Activated T-helper 1 cell treated with anti-CD3 and anti-CD28 coated beads, Interleukin-12 subunit alpha, Interleukin-12 subunit beta, Interleukin-2, Interleukin-4 antibody, amounts not matched to agents 30 ng/mL and 10 ng/mL and 1 ng/mL, durations not matched to agents 14 hours and 24 hours and 36 hours (primary cell): ENCODE measurements at regions of chr15 and their contacts with region 1.

Region 1: GRCh38 chr15:85485956-85486567 is 105.7 kb downstream of the AKAP13 start:
- DNase-seq: peak; percentile 54
- H3K4me3 Mint-ChIP-seq: no peak overlapping the region
- H3K27ac Mint-ChIP-seq: no peak overlapping the region
- H3K4me1 Mint-ChIP-seq: peaks cover 57% of the 10 kb centered on the region
- H3K27me3 Mint-ChIP-seq: no peaks in the 10 kb centered on the region

Region 2: DNA sequence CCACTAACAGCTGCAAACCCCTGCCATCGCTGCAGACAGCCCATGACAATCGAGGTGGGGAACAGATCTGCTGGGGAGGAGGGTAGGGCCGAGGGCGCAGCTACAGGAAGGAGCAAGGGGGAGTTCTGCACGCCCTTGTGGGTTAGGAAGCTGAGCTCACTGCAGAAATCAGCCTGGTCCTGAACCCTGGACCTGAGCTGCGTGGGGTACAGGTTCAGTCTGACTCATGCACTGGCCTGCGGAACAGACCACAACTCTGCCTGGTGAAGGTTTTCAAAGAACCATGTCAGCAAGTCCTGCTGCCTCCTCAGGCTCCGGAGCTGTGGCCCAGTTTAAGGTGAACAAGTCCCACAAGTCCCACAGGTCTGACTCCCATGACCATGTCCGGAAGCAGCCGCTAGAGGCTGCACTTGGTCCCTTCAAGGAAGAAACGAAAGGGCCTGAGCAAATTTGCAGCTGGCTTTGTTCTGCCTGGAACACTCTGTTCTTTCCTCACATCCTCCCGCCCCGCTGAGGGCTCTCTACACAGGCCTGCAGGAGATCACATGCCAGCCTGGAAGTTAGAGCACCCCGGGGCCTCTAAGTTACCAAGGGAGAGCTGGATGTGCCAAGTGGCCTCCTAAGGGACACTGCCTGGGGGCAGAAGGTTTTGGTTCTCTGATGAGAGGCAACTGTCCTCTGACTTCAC is 155.0 kb before region 1 on chr15:
- intact Hi-C with region 1: loop called (anchors 1 kb)
- DNase-seq: peak; percentile 72
- H3K4me3 Mint-ChIP-seq: peak overlapping the region; percentile 88
- H3K27ac Mint-ChIP-seq: peak overlapping the region; percentile 92
- H3K4me1 Mint-ChIP-seq: peaks cover 51% of the 10 kb centered on the region
- H3K27me3 Mint-ChIP-seq: no peaks in the 10 kb centered on the region

Region 3: DNA sequence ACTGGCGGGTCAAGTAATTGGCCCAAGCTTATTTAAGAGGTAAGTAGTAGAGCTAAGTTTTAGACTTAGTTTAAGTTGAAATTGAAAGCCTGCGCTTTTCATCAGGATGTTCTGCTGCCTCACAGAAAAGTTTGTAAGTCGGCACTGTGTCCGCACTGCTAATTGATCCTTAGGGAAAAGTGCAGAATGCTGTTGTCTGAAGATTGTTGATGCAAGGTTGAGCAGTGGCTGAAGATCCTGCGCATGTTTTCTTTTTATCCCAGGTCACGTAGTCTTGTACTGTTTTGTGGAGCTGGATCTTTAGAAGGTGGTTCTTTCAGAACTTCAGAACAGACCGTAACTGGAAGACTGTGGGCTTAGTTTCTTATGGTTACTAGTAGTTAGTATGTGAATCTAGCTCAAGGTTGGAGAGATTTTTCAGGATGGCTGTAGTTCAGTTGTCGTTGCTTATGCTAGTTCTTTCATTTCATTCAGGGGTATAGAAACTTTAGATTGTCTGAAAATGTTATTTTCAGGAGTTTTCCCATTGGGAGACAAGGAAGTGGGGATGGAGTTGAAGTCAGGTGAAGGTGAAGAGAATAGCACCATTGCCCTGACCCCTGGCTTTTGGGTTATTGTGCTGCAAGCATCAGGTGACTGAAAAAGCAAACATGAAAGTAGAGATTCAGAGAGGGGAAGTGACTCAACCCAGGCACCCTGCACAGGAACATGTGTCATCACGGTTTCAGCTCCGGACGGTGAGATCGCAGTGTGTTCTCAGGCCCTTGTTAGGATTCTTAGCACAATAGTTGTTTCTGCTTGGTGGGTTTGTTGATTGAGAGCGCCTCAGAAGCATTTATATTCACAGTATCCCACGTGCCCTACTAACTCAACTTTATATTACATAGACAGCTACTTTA is 72.9 kb before region 1 on chr15:
- intact Hi-C with region 1: no loop called
- DNase-seq: peak; percentile 66
- H3K4me3 Mint-ChIP-seq: peak overlapping the region; percentile 64
- H3K27ac Mint-ChIP-seq: peak overlapping the region; percentile 85
- H3K4me1 Mint-ChIP-seq: peaks cover 64% of the 10 kb centered on the region
- H3K27me3 Mint-ChIP-seq: no peaks in the 10 kb centered on the region

Region 4: GRCh38 chr15:85499371-85499887 is 13.4 kb after region 1 on chr15:
- intact Hi-C with region 1: no loop called
- DNase-seq: no peak
- H3K4me3 Mint-ChIP-seq: no peak overlapping the region
- H3K27ac Mint-ChIP-seq: no peak overlapping the region
- H3K4me1 Mint-ChIP-seq: peaks cover 44% of the 10 kb centered on the region
- H3K27me3 Mint-ChIP-seq: no peaks in the 10 kb centered on the region

Region 5: DNA sequence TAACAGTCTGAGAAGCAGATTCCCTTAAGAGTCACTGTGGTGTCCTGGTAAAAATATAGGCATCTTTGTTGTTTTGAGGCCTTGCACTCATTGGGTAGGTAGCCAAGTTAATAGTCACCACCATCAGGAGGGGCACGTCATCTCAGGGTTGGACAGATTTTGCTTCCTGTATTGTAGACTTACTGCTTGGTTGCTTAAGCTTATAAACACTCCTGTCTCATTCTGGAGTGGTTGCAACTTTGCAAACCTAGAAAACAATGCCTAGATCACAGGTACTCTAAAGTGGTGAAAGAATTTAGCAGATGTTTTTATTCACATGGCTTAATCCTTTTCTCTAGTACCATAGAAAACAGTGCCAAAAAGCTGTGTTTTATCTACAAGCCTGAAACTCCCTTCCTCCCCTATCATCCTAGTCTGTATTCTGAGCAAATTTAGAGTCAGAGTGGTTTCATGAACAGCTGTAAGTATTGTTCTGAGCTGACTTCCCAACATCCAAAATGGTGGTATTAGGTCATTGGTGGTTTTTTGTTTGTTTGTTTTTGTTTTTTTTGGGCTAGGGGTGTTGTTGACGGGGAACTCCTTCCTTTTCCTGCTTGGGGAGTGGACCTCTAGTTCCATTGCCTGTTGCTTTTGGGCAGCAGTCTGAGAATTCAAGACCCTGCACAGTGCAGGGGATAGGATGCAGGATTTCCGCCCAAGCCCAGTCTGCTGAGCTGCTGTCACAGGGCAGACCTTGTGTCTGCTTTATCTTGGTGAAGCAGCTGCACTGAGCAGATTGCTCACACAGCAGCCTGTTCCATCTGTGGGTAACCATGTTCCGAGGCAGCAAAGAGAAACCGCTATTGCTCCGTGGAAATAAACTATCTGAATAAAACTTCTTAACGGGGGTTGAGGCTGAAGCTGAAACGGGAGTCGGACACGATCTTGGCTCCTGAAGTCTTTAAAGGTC is 96.3 kb after region 1 on chr15:
- intact Hi-C with region 1: loop called (anchors 1 kb)
- DNase-seq: peak; percentile 67
- H3K4me3 Mint-ChIP-seq: peak overlapping the region; percentile 84
- H3K27ac Mint-ChIP-seq: peak overlapping the region; percentile 95
- H3K4me1 Mint-ChIP-seq: peaks cover 84% of the 10 kb centered on the region
- H3K27me3 Mint-ChIP-seq: no peaks in the 10 kb centered on the region

Region 6: GRCh38 chr15:85707519-85708338 is 221.7 kb after region 1 on chr15:
- intact Hi-C with region 1: loop called (anchors 1 kb)
- DNase-seq: no peak
- H3K4me3 Mint-ChIP-seq: peak overlapping the region; percentile 83
- H3K27ac Mint-ChIP-seq: peak overlapping the region; percentile 99
- H3K4me1 Mint-ChIP-seq: peaks cover 88% of the 10 kb centered on the region
- H3K27me3 Mint-ChIP-seq: no peaks in the 10 kb centered on the region

Region 7: DNA sequence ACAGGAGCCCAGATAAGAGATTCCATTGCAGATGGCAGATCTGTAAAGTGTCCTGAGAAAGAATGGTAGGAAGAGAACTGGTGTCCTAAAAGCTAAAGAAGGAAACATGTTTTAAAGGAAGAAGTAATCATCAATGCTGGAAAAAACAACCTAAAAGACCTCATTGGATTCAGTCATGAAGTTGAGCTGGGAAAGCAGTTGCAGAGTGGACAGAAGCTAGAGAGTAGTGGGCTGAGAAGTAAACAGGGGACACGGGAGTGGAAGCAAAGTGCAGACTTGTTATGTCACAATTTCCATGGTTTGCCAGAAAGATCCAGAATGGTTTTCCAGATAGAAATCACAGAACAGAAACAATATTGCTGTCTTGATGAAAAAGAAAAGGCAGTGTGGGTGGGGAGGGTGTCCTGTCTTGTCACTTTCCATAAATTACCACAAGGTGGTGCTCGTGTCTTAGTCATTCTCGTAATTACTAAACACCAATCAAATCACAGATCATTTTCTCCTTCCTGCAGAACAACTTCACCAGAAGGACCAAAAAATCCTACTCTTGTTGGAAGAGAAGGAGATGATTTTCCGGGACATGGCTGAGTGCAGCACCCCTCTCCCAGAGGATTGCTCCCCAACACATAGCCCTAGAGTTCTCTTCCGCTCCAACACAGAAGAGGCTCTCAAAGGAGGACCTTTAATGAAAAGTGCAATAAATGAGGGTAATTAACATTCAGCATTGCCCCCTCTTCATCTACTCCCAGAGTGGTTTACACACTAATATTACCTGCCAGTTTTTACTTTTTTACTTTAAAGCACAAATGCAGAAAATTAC is 244.1 kb after region 1 on chr15:
- intact Hi-C with region 1: loop called (anchors 1 kb)
- DNase-seq: peak; percentile 23
- H3K4me3 Mint-ChIP-seq: no peak overlapping the region
- H3K27ac Mint-ChIP-seq: peak overlapping the region; percentile 66
- H3K4me1 Mint-ChIP-seq: peaks cover 19% of the 10 kb centered on the region
- H3K27me3 Mint-ChIP-seq: no peaks in the 10 kb centered on the region

Region 8: DNA sequence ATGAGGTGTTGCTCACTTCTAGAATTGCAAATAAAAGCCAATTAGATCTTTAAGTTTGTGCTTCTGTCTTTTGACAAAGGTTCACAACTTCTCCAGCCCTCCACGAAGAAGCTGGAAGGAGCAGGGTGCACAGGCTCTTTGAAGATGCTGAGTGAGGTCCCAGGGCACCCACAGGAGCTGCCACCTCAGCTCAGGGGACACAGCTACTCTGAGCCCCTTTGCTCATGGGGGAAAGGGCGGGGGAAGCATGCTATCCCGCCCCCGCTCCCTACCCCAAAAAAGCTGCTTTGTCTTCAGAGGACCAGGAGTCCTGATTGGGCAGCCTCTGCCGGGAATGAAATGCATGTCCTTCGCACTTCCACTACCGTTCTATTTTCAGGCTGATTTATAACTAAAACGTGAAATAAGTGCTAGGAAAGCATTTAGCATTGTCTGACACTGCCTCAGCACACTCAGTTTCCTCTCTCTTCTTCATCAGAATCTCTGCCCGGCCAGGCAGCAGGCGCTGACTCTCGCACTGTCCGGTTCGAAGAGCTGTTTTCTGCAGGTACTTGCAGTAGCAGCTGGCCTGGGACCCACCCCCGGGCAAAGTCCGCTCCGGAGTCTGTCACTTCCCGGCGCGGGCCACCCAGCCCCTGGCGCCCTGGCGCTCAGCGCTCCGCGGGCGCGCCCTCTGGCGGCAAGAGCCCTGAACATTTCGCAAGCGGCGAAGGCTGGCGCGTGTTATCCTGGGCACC is 354.2 kb after region 1 on chr15:
- intact Hi-C with region 1: loop called (anchors 2 kb)
- DNase-seq: peak; percentile 76
- H3K4me3 Mint-ChIP-seq: peak overlapping the region; percentile 29
- H3K27ac Mint-ChIP-seq: no peak overlapping the region
- H3K4me1 Mint-ChIP-seq: no peaks in the 10 kb centered on the region
- H3K27me3 Mint-ChIP-seq: peaks cover 7% of the 10 kb centered on the region